Testis (tissue), 5 donors: ENCODE measurements at regions of chr12 and their contacts with region 1.

Region 1: GRCh38 chr12:54220092-54220557 is 31.3 kb upstream of the SMUG1 start:
- DNase-seq: peak; percentile 87
- H3K4me3 ChIP-seq: no peak overlapping the region
- H3K27ac ChIP-seq: no peak overlapping the region
- H3K4me1 ChIP-seq: peaks cover 16% of the 10 kb centered on the region
- H3K27me3 ChIP-seq: no peaks in the 10 kb centered on the region
- CTCF ChIP-seq: peak; percentile 75 to 88 (median 76)
- POLR2A ChIP-seq: no peak

Region 2: DNA sequence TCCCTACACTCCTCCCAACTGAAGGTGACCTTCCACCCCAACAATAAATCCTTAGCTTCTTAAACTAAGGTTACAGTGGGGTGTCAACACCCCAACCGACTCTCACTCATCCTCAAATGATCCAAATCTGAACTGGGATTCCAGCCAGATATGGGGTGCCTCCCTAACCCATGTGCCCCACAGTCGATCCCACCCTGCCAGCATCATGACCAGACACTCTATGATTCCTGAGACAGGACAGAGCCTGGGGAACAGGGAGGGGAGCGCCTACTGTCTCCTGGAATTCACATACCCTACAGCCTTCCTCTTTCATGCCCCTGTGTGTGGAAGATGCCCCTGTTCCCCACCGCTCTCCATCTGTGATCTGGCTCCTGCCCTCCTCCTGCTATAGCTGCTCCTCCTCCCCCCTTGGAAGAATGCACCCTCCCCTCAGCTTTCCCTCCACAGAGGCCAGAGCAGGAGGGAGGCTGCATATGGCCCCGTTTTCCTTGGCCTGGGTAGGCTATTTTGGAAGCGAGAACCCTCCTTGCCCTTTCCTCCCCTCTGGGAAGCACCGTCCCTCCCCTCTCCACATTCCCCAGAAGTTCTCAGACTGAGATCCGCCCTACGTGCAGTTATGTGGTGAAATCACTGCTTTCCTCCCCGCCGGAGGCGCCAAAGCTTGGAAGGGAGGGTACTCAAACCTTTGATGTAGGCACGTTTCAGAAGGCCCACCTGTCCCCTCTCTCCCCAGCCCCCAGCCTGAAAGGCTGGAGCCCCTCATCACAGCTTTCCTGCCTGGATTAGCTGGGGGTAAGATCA is 79.3 kb before region 1 on chr12:
- intact Hi-C with region 1: no loop called
- DNase-seq: peak; percentile 55
- H3K4me3 ChIP-seq: no peak overlapping the region
- H3K27ac ChIP-seq: peak overlapping the region; percentile 63 to 64
- H3K4me1 ChIP-seq: peaks cover 13% of the 10 kb centered on the region
- H3K27me3 ChIP-seq: no peaks in the 10 kb centered on the region
- CTCF ChIP-seq: no peak
- POLR2A ChIP-seq: no peak

Region 3: DNA sequence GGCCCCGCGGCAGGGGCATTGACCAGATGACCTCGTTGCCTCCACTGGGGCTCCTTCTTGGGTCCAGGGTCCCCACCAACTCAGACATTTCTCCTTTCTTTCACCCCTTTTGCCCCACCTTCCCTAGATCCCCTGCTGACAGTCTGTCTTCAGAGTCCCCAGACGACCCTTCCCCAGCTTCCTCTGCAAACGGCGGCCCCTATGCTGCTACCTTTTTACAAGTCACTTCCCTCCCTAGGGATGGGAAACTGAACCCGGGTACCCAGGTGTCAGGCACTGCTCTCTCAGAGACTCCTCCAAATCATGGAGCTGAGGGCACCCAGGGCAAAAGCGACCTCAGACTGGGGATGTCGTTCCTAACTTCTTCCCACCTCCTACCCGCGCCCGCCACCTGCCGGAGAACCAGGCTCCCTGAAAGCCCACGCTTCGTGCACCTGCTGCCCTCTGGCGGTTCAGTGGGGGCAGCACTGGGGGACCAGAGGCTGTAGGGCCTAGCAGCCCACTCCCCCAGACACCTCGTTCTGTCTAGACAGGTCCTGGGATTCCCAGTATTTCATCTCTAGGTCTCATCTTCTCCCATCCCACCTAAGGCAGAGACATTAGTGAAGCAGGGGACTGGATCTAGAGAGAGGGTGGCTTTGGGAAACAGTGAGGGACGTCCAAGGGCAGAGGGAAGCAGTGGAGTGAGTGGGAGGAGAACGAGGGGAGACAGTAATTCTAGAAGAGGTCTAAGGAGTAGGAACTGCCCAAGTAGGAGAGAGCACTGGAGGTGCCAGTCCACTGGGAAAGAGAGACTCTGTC is 159.5 kb after region 1 on chr12:
- intact Hi-C with region 1: loop called (anchors 10 kb)
- DNase-seq: peak; percentile 93
- H3K4me3 ChIP-seq: peak overlapping the region; percentile 50 to 53
- H3K27ac ChIP-seq: peak overlapping the region; percentile 50 to 70
- H3K4me1 ChIP-seq: peaks cover 13% of the 10 kb centered on the region
- H3K27me3 ChIP-seq: no peaks in the 10 kb centered on the region
- CTCF ChIP-seq: peak; percentile 96 to 100 (median 98)
- POLR2A ChIP-seq: no peak